Posterior vena cava (tissue), 2 donors: ENCODE measurements at regions of chr1 and their contacts with region 1.

Region 1: GRCh38 chr1:230917284-230918135 is 49.2 kb upstream of the C1orf198 start:
- DNase-seq: peak; percentile 84

Region 2: DNA sequence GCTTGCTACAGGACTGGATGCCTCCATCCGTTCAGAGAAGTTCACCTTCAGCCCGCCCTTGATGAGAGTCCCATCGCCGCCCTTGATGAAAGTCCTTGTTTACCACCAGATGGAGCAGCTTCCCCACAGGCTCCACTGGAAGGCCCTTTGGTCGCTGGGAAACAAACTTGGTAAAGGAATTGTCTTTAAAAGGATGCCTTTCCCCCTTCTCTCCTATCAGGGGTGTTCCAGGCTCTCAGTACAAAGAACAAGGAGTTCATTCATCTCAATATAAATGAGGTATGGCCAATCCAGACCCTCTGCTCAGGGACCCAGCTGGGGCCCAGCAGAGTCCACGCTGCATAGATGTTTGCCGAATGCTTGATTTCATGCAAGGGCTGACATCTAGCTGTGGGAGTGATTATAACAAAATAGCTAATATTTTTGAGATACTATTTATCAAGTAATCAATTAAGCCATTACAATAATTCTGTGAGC is 119.5 kb before region 1 on chr1:
- intact Hi-C with region 1: loop called (anchors 1 to 5 kb)
- DNase-seq: no peak

Region 3: DNA sequence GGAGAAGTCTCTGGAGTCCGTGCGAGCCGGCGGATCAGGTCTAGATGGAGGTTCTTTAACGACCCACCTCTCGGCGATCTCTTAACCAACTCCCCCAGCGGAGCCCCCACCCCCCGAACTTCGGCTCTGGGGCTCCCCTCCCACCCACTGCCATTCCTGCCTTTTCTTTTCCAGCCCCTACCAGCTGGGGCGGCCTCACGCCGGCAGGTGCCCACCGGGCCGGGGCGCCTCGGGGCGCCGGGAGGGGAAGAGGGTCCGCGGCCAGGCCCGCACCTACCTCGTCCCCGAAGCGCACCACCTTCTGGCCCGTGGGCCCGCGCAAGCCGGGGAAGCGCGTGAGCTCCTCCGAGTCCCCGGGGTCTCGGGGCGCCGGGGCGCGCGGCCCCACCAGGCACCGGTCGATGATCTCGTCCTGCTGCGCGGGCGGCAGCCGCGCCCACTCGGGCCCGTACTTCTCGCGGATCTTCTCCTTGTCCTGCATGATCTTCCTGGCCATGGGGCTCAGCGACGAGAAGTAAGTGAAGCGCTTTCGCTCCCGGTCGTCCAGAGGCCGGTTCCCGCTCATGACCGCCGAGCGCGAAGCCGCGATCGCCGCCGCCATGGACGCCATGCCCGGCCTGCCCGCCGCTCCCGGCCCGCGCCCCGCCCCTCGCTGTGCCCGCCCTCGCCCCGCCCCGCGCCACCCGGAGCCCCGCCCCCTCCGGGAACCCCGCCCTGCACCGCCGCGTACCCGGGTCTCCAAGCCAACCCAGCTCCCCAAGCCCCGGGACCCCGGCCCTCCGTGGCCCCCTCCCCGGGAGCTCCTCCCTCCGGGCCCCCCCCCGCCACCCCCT is 49.4 kb before region 1 on chr1 and contains the start of gene C1orf198:
- intact Hi-C with region 1: loop called in 1 of 2 experiments (anchors 10 kb)
- DNase-seq: peak; percentile 89
- total RNA-seq, gene C1orf198: 79.5 to 98.4 TPM

Region 4: GRCh38 chr1:230930986-230931385 is 13.5 kb after region 1 on chr1:
- intact Hi-C with region 1: loop called in 1 of 2 experiments (anchors 2 kb)
- DNase-seq: no peak

Region 5: GRCh38 chr1:230948903-230949302 is 31.4 kb after region 1 on chr1:
- intact Hi-C with region 1: loop called in 1 of 2 experiments (anchors 1 kb)
- DNase-seq: no peak